ENCODE measurements at regions of chr6 and their contacts with region 1.

Region 1: DNA sequence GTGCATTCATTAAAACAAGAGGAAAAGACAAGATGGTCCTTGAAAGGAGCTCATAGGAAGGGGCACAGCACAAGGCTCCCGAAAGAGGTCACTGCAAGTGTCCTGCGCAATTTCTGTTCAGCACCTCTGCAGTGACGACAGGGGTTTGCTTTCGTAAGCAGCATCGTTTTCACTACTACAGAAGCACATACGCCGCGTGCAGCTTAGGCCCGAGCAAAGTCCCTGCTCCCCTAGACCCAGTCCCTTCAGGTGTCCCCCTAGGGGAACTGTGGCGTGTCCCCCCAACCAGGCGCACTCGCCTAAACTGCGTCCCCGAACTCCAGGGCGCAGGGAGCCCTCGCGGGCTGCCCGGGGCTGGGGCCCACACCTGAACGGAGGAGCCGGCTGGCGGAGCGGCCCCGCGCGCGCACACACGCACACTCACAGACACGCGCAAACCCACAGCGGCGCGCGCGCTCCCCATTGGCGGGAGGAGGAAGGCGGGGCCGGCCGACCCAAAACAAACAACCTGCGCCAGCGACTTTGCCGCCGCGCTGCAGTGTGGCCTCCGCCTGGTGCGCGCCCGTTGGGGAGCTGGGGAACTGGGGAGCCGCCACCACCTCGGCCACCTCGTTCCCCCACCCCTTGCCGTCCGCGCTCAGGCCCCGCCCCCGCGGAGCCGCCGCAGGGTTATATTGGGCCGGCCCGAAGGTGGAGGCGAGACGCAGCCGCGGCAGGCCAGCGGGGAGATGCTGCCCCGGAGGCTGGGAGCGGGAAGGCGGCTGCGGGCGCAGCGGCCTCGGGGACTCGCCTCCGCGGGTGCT is at the start of gene FOXQ1:
- DNase-seq: peak; percentile 96 to 98
- H3K4me3 ChIP-seq: peak within 1 kb of the TSS; percentile 94
- H3K4me3 Mint-ChIP-seq: peak within 1 kb of the TSS; percentile 78
- H3K27ac Mint-ChIP-seq: peak within 1 kb of the TSS; percentile 89
- H3K4me1 ChIP-seq: peaks cover 26% of the 10 kb centered on the region
- H3K4me1 Mint-ChIP-seq: peaks cover 39% of the 10 kb centered on the region
- H3K27me3 ChIP-seq: no peaks in the 10 kb centered on the region
- H3K27me3 Mint-ChIP-seq: peaks cover 2% of the 10 kb centered on the region
- CTCF ChIP-seq: peak in 1 of 2 experiments; percentile 16
- total RNA-seq, gene FOXQ1: 170 and 191 TPM in 2 replicates

Region 2: GRCh38 chr6:1055015-1055921 is 256.3 kb before region 1 on chr6:
- CTCF ChIA-PET with region 1: no interaction called
- POLR2A ChIA-PET with region 1: interaction called, 5 read pairs
- intact Hi-C with region 1: loop called (anchors 1 kb)
- DNase-seq: peak; percentile 93
- H3K4me3 ChIP-seq: no peak overlapping the region
- H3K4me3 Mint-ChIP-seq: no peak overlapping the region
- H3K27ac Mint-ChIP-seq: no peak overlapping the region
- H3K4me1 ChIP-seq: peaks cover 52% of the 10 kb centered on the region
- H3K4me1 Mint-ChIP-seq: peaks cover 18% of the 10 kb centered on the region
- H3K27me3 ChIP-seq: no peaks in the 10 kb centered on the region
- H3K27me3 Mint-ChIP-seq: no peaks in the 10 kb centered on the region
- CTCF ChIP-seq: no peak

Region 3: GRCh38 chr6:1227935-1228753 is 83.5 kb before region 1 on chr6:
- CTCF ChIA-PET with region 1: interaction called, 13 read pairs
- POLR2A ChIA-PET with region 1: interaction called, 42 read pairs
- intact Hi-C with region 1: loop called (anchors 1 kb)
- DNase-seq: peak; percentile 91 to 94
- H3K4me3 ChIP-seq: peak overlapping the region; percentile 0; the same call in 1 of the 2 replicates
- H3K4me3 Mint-ChIP-seq: peak overlapping the region; percentile 52
- H3K27ac Mint-ChIP-seq: peak overlapping the region; percentile 67
- H3K4me1 ChIP-seq: peaks cover 57% of the 10 kb centered on the region
- H3K4me1 Mint-ChIP-seq: peaks cover 63% of the 10 kb centered on the region
- H3K27me3 ChIP-seq: no peaks in the 10 kb centered on the region
- H3K27me3 Mint-ChIP-seq: no peaks in the 10 kb centered on the region
- CTCF ChIP-seq: no peak

Region 4: GRCh38 chr6:1325461-1326309 is 14.1 kb after region 1 on chr6:
- CTCF ChIA-PET with region 1: interaction called, 7 read pairs
- POLR2A ChIA-PET with region 1: interaction called, 16 read pairs
- intact Hi-C with region 1: no loop called
- DNase-seq: peak; percentile 82 to 91
- H3K4me3 ChIP-seq: no peak overlapping the region
- H3K4me3 Mint-ChIP-seq: peak overlapping the region; percentile 38
- H3K27ac Mint-ChIP-seq: peak overlapping the region; percentile 79
- H3K4me1 ChIP-seq: peaks cover 58% of the 10 kb centered on the region
- H3K4me1 Mint-ChIP-seq: peaks cover 39% of the 10 kb centered on the region
- H3K27me3 ChIP-seq: no peaks in the 10 kb centered on the region
- H3K27me3 Mint-ChIP-seq: no peaks in the 10 kb centered on the region
- CTCF ChIP-seq: no peak

Region 5: DNA sequence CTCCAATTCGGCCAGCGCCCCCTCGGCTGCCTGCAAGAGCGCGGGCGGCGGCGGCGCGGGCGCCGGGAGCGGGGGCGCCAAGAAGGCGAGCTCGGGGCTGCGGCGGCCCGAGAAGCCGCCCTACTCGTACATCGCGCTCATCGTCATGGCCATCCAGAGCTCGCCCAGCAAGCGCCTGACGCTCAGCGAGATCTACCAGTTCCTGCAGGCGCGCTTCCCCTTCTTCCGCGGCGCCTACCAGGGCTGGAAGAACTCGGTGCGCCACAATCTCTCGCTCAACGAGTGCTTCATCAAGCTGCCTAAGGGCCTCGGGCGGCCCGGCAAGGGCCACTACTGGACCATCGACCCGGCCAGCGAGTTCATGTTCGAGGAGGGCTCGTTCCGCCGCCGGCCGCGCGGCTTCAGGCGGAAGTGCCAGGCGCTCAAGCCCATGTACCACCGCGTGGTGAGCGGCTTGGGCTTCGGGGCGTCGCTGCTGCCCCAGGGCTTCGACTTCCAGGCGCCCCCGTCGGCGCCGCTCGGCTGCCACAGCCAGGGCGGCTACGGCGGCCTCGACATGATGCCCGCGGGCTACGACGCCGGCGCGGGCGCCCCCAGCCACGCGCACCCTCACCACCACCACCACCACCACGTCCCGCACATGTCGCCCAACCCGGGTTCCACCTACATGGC is 78.7 kb after region 1 on chr6:
- CTCF ChIA-PET with region 1: no interaction called
- POLR2A ChIA-PET with region 1: no interaction called
- intact Hi-C with region 1: no loop called
- DNase-seq: no peak
- H3K4me3 ChIP-seq: no peak overlapping the region
- H3K4me3 Mint-ChIP-seq: peak overlapping the region; percentile 63
- H3K27ac Mint-ChIP-seq: no peak overlapping the region
- H3K4me1 ChIP-seq: no peaks in the 10 kb centered on the region
- H3K4me1 Mint-ChIP-seq: no peaks in the 10 kb centered on the region
- H3K27me3 ChIP-seq: no peaks in the 10 kb centered on the region
- H3K27me3 Mint-ChIP-seq: peaks cover 6% of the 10 kb centered on the region
- CTCF ChIP-seq: no peak

Region 6: GRCh38 chr6:1767481-1768251 is 456.1 kb after region 1 on chr6:
- CTCF ChIA-PET with region 1: no interaction called
- POLR2A ChIA-PET with region 1: no interaction called
- intact Hi-C with region 1: no loop called
- DNase-seq: no peak
- H3K4me3 ChIP-seq: no peak overlapping the region
- H3K4me3 Mint-ChIP-seq: no peak overlapping the region
- H3K27ac Mint-ChIP-seq: no peak overlapping the region
- H3K4me1 ChIP-seq: 0 out of 2 replicates have a peak, but pooled peaks cover 6% of the 10 kb centered on the region
- H3K4me1 Mint-ChIP-seq: no peaks in the 10 kb centered on the region
- H3K27me3 ChIP-seq: no peaks in the 10 kb centered on the region
- H3K27me3 Mint-ChIP-seq: no peaks in the 10 kb centered on the region
- CTCF ChIP-seq: no peak

Measured in Caco-2 (cell line).